Heart left ventricle (tissue), 16 donors: ENCODE measurements at regions of chr9 and their contacts with region 1.

Region 1: GRCh38 chr9:90860826-90861225 is 59.2 kb downstream of the SYK start:
- DNase-seq: no peak
- ATAC-seq: peak in 2 of 4 donors; percentile 40 to 42
- H3K4me3 ChIP-seq: no peak overlapping the region
- H3K27ac ChIP-seq: peak overlapping the region in 1 of 12 donors; percentile 46
- H3K4me1 ChIP-seq: peaks cover 0 to 29% (median 0%) of the 10 kb centered on the region in 12 donors
- H3K27me3 ChIP-seq: no peaks in the 10 kb centered on the region
- CTCF ChIP-seq: no peak
- POLR2A ChIP-seq: no peak

Region 2: DNA sequence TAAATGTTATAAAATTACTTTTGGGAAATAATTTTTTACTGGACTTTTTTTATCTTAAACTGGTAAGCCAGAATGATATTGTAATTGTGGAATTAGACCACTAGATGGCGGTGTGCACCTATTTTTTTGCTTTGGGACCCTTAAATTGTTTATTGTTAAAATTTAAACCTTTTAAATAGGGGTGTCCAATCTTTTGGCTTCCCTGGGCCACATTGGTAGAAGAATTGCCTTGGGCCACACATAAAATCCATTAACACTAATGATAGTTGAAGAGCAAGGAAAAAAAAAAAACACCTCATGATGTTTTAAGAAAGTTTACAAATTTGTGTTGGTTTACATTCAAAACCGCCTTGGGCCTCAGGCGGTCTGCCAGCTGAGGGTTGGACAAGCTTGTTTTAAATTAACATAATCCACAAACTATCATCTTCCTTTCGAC is 1284.4 kb before region 1 on chr9:
- intact Hi-C with region 1: loop called in 1 of 10 experiments (anchors 10 kb)
- DNase-seq: no peak
- ATAC-seq: no peak
- H3K4me3 ChIP-seq: no peak overlapping the region
- H3K27ac ChIP-seq: no peak overlapping the region
- H3K4me1 ChIP-seq: peaks cover 0 to 15% (median 0%) of the 10 kb centered on the region in 12 donors
- H3K27me3 ChIP-seq: peaks cover 0 to 55% (median 7%) of the 10 kb centered on the region in 9 donors
- CTCF ChIP-seq: peak; percentile 65 to 85 (median 81)
- POLR2A ChIP-seq: no peak

Region 3: DNA sequence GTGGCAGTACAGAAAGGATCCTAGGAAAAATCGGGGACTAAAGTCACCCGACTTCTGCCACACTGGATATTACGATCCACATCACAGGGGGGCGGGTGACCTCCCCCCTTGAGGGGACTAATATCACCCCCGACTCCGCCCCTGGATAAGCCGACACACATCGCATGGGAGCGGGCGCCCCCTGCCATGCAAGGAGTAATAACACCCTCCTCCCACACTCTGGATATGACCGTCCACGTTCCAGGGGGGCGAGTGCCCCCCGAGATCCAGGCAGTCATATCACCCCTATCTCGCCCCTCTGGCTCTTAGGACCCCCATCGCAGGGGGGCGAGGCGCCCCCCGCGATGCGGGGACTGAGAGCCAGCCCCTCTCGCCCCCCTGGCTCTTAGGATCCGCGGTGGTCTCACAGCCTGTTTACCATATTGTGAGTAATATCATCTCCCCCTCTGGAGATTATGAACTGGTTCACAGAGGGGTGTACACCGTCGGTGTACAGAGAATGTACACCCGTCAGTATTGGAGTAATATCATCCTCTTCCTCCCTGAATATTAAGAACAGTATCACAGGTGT is 641.2 kb before region 1 on chr9:
- intact Hi-C with region 1: loop called in 2 of 10 experiments (anchors 10 kb)
- DNase-seq: peak in 1 of 5 donors; percentile 31
- ATAC-seq: peak in 1 of 4 donors; percentile 44
- H3K4me3 ChIP-seq: no peak overlapping the region
- H3K27ac ChIP-seq: no peak overlapping the region
- H3K4me1 ChIP-seq: no peaks in the 10 kb centered on the region
- H3K27me3 ChIP-seq: peaks cover 0 to 16% (median 6%) of the 10 kb centered on the region in 9 donors
- CTCF ChIP-seq: peak; percentile 23 to 50 (median 34)
- POLR2A ChIP-seq: no peak

Region 4: DNA sequence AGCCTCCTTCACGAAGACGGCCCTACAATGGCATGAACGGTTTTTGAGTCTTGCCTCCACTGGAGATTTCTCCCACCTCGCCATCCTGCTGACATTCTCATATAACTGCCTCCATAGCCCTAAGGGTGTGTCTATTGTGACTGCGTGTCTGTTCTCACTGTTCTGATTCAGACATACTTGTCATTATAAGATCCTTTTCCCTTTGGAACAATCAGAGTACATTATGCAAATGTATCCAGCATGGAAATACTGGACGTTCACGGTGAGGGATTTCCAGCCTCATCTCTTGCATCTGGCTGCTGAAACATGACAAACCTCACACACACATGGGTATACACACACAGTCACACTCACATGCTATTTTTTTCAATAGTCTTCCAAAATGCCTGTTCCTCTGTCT is 620.3 kb before region 1 on chr9:
- intact Hi-C with region 1: loop called in 1 of 10 experiments (anchors 10 kb)
- DNase-seq: no peak
- ATAC-seq: no peak
- H3K4me3 ChIP-seq: no peak overlapping the region
- H3K27ac ChIP-seq: no peak overlapping the region
- H3K4me1 ChIP-seq: no peaks in the 10 kb centered on the region
- H3K27me3 ChIP-seq: no peaks in the 10 kb centered on the region
- CTCF ChIP-seq: no peak
- POLR2A ChIP-seq: no peak